ENCODE measurements at regions of chr10 and their contacts with region 1.

Region 1: DNA sequence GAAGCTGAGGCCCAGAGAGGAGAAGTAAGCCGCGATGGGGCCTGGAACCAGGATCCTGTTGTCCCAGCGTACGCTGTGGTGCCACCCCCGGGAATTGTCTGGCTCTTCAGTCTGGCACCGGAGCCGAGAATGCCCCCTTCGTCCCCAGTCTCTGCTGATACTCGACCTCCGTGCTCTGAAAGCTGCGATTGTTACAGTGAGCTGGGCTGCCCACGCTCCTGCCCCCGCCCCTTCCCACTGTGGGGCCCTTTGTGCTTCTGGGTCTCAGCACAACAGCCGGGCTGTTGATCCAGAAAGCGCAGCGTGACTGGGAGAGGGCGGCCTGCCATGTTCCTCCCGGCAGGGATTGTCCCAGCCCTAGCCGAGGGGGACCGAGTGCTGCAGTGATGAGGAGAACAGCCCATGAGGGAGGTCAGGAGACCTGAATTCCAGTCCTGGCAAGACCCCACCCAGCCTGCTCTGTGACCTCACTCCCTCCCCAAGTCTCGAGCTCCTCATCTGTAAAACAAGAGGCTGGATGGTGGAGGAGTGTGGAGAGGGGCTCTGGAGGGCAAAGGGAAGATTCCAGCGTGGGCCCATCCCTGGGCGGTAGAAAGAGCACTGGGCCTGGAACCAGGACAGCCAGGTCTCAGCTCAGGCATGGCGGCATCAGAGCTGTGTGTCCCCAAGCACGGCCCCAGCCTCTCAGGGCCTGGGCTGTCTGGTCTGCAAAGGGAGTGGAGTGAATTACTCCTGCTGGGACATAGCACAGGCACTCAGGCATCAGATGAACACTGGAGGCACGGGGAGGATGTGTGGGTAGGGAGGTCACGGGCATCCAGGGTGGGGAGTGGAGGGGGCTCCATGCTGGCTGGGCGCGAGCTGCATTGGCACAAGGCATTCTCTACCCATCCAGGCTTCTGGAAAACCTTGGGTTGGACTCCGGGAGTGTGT is 43.6 kb downstream of the TSPAN15 start:
- DNase-seq: no peak
- ATAC-seq: no peak
- H3K4me3 ChIP-seq: no peak overlapping the region
- H3K27ac ChIP-seq: no peak overlapping the region
- H3K4me1 ChIP-seq: peaks cover 6% of the 10 kb centered on the region
- H3K27me3 ChIP-seq: no peaks in the 10 kb centered on the region
- CTCF ChIP-seq: no peak

Region 2: GRCh38 chr10:69425511-69426298 is 69.2 kb before region 1 on chr10:
- CTCF ChIA-PET with region 1: no interaction called
- POLR2A ChIA-PET with region 1: no interaction called
- in situ Hi-C with region 1: no loop called
- intact Hi-C with region 1: loop called (anchors 5 kb)
- DNase-seq: no peak
- ATAC-seq: no peak
- H3K4me3 ChIP-seq: no peak overlapping the region
- H3K27ac ChIP-seq: peak overlapping the region; percentile 39; the same call in 1 of the 2 replicates
- H3K4me1 ChIP-seq: peaks cover 25% of the 10 kb centered on the region
- H3K27me3 ChIP-seq: no peaks in the 10 kb centered on the region
- CTCF ChIP-seq: no peak

Region 3: GRCh38 chr10:69449841-69450240 is 45.1 kb before region 1 on chr10:
- CTCF ChIA-PET with region 1: no interaction called
- POLR2A ChIA-PET with region 1: no interaction called
- in situ Hi-C with region 1: loop called (anchors 10 kb)
- intact Hi-C with region 1: no loop called
- DNase-seq: peak; percentile 69
- ATAC-seq: peak; percentile 69
- H3K4me3 ChIP-seq: peak overlapping the region; percentile 69 to 84; a peak in 3 of 4 replicates
- H3K27ac ChIP-seq: peak overlapping the region; percentile 84
- H3K4me1 ChIP-seq: peaks cover 79% of the 10 kb centered on the region
- H3K27me3 ChIP-seq: no peaks in the 10 kb centered on the region
- CTCF ChIP-seq: peak; percentile 91

Region 4: GRCh38 chr10:69464801-69465401 is 30.0 kb before region 1 on chr10:
- CTCF ChIA-PET with region 1: no interaction called
- POLR2A ChIA-PET with region 1: interaction called, 13 read pairs
- in situ Hi-C with region 1: no loop called
- intact Hi-C with region 1: no loop called
- DNase-seq: no peak
- ATAC-seq: peak; percentile 51
- H3K4me3 ChIP-seq: no peak overlapping the region
- H3K27ac ChIP-seq: peak overlapping the region; percentile 68
- H3K4me1 ChIP-seq: peaks cover 92% of the 10 kb centered on the region
- H3K27me3 ChIP-seq: no peaks in the 10 kb centered on the region
- CTCF ChIP-seq: no peak

Region 5: DNA sequence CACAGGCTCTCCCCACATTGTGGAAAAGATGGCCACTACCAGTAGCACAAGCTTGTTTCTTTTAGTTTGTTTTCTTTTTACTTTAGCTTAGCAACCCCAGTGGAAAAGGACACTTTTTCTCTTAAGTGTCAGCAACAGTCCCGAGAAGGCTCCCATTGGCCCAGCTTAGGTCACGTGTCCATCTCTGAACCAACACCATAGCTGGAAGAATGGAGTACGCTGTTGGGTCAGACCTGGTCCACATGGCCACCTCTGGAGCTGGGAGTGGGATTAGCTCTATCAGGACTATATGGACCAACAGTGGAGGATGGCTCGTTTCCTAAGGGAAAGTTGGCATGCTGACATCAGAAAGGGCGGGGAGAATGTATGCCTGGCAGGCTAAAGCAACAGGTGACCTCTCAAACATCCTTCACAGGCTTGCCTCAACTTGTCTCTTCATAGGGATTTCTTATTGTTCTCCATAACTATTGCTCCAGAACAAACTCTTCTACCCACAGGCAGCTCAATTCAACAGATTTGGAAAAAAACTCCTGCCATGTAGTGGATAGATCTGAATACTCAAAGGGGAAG is 106.0 kb after region 1 on chr10:
- CTCF ChIA-PET with region 1: no interaction called
- POLR2A ChIA-PET with region 1: no interaction called
- in situ Hi-C with region 1: no loop called
- intact Hi-C with region 1: no loop called
- DNase-seq: no peak
- ATAC-seq: no peak
- H3K4me3 ChIP-seq: no peak overlapping the region
- H3K27ac ChIP-seq: no peak overlapping the region
- H3K4me1 ChIP-seq: no peaks in the 10 kb centered on the region
- H3K27me3 ChIP-seq: peaks cover 40% of the 10 kb centered on the region
- CTCF ChIP-seq: no peak

Region 6: GRCh38 chr10:69639291-69640195 is 144.7 kb after region 1 on chr10:
- CTCF ChIA-PET with region 1: no interaction called
- POLR2A ChIA-PET with region 1: no interaction called
- in situ Hi-C with region 1: no loop called
- intact Hi-C with region 1: no loop called
- DNase-seq: peak; percentile 51
- ATAC-seq: peak; percentile 79
- H3K4me3 ChIP-seq: no peak overlapping the region
- H3K27ac ChIP-seq: no peak overlapping the region
- H3K4me1 ChIP-seq: no peaks in the 10 kb centered on the region
- H3K27me3 ChIP-seq: no peaks in the 10 kb centered on the region
- CTCF ChIP-seq: peak; percentile 97

Region 7: DNA sequence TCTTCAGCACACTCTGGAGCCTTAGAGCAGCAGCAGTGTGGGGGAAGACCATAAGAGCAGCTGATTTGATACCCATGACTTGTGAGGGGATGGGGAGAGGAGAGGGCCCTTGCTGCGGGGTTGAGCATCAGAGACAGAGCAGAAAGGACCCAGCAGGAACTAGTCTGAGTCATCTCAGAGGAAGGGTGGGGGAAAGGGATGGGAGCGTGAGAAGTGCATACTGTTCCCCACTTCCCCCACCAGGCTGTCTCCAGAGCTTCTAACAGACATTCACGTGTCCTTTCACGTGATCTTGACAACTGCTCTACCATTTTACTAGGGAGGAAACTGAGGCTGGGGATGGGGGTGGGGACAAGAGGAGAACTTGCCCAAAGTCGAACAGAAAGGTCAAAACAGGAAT is 173.8 kb after region 1 on chr10:
- CTCF ChIA-PET with region 1: no interaction called
- POLR2A ChIA-PET with region 1: no interaction called
- in situ Hi-C with region 1: no loop called
- intact Hi-C with region 1: no loop called
- DNase-seq: no peak
- ATAC-seq: no peak
- H3K4me3 ChIP-seq: no peak overlapping the region
- H3K27ac ChIP-seq: no peak overlapping the region
- H3K4me1 ChIP-seq: no peaks in the 10 kb centered on the region
- H3K27me3 ChIP-seq: peaks cover 37% of the 10 kb centered on the region
- CTCF ChIP-seq: no peak

Region 8: DNA sequence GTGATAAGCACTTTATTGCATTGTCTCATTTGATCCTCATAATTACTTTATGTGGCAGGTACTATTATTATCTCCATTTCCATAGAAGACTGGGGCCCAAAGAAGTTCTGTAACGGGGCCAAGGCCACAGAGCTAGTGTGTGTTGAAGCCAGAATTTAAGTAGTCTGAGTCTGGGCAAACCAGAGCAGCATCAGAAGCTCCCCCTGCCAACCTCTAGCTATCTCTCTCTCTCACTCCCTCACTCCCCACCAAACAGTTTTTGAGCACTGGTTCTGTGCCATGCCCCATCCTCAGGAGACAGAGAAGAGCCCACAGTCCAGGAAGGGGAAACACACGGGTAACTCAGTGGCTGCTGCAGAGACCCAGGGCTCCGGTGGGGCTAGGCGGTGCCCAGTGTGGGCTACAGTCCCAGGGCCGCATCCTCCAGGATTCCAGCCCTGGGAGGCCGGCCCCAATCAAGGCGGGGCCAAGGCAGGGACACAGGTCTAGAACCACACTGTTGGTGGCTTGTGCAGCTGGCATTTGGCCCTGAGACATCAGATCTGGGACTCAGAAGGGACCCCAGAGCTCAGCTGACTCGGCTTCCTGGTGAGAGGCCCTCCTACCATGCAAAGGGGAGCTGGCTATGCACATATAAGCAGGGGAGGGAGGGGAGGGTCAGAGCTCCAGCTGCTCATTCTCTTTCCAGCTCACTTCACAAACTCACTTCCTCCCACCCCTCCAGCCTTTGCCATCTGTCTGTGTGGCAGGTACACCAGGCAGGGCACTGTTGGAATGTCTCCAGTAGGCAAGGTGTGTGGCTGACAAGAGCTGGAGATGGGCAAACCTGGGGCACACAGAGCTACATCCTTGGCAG is 341.2 kb after region 1 on chr10:
- CTCF ChIA-PET with region 1: no interaction called
- POLR2A ChIA-PET with region 1: no interaction called
- in situ Hi-C with region 1: no loop called
- intact Hi-C with region 1: no loop called
- DNase-seq: no peak
- ATAC-seq: no peak
- H3K4me3 ChIP-seq: no peak overlapping the region
- H3K27ac ChIP-seq: no peak overlapping the region
- H3K4me1 ChIP-seq: no peaks in the 10 kb centered on the region
- H3K27me3 ChIP-seq: no peaks in the 10 kb centered on the region
- CTCF ChIP-seq: no peak

Measured in Panc1 (cell line).